AG04449 (cell line): ENCODE measurements at regions of chr4 and their contacts with region 1.

Region 1: DNA sequence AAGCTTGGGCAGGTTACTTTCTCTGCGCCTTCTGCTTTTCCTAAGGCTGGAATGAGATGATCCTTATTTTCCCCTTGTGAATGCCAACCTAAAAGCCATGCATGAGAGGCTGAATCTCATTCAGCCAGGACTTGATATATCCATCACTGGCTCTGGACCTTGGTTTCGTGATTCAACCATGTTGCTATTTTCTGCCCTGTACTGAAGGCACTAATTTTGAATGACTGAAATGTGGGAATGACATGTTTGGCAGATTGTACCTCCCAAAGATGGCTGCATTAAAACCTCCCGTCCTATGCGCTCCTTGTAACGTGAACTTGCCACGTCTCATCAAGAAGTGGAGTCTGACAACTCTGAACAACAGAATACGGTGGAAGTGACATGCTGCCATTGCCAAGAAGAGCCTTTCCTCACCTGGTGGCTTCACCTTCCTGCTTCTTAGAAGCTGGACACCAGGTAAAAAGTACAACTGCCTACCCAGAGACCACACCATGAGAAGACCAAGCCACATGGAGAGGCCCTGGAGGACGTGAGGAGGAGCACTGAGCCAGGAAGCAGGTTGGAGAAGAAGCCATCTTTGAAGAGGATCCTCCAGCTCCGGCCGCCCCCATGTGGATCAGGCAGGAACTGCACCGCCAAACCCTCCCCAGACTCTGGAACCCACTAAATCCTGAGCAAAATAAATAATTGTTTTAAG is 174.5 kb downstream of the NSUN7 start:
- DNase-seq: no peak
- H3K4me3 ChIP-seq: no peak overlapping the region
- CTCF ChIP-seq: peak; percentile 96

Region 2: DNA sequence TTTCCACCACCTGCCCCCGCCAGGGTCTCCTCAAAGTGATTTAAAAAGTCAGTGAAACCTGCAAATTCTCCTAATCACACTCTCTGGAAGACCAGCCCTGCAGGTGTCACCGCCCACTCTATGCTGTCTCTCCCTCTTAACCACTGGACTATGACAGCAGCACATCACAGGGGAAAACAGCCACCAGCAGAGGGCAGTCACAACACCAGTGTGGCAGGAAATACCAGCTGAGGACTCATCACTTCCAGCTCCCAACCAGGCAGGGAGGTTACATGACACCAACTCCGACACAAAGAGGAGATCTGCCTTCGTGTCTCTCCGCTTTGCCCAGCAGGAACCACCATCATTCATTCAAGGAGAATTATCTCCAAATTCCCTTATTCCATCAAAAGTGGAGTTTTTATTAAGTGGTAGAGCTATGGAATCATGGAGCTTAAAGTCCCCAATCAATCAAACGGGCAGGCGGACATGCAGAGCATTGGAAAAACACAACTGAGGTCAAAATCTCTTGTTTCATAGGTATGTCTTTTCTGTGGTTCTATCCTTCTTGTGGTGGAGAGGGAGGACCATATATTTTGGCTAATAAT is 83.2 kb before region 1 on chr4:
- CTCF ChIA-PET with region 1: interaction called, 16 read pairs
- POLR2A ChIA-PET with region 1: no interaction called
- DNase-seq: peak; percentile 50
- H3K4me3 ChIP-seq: no peak overlapping the region
- CTCF ChIP-seq: peak; percentile 85

Region 3: GRCh38 chr4:40940317-40940741 is 16.1 kb after region 1 on chr4:
- CTCF ChIA-PET with region 1: interaction called, 107 read pairs
- POLR2A ChIA-PET with region 1: no interaction called
- DNase-seq: no peak
- H3K4me3 ChIP-seq: no peak overlapping the region
- CTCF ChIP-seq: no peak

Region 4: GRCh38 chr4:40976343-40976742 is 52.1 kb after region 1 on chr4:
- CTCF ChIA-PET with region 1: interaction called, 35 read pairs
- POLR2A ChIA-PET with region 1: no interaction called
- DNase-seq: no peak
- H3K4me3 ChIP-seq: no peak overlapping the region
- CTCF ChIP-seq: peak; percentile 55

Region 5: DNA sequence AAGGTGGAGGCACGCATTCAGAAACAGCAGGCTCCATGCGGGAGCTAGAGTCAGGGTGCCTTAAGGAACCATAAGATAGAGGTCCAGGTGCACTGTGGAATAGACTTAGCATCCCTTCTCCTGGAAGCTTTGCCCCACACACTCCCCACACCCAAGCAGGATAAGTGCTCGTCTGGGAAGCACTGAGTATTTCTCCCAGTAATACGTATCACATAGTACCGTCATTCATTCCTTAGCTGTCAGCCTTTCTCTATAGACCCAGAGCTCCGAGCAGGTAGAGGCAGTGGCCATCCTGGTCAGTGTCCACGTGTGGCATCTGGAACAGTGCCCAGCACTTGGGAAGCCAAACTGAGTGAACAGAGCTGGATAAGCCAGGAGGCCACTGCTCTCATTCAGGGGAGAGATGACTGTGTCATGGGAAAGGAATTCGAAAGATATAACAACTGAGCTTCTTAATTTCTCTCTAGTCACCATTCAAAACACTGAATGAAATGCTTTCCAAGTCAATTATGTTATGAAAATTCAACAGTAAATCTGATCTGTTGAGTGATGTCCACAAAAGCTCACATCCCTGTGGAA is 280.2 kb after region 1 on chr4:
- CTCF ChIA-PET with region 1: interaction called, 336 read pairs
- POLR2A ChIA-PET with region 1: no interaction called
- DNase-seq: no peak
- H3K4me3 ChIP-seq: no peak overlapping the region
- CTCF ChIP-seq: no peak

Region 6: GRCh38 chr4:41227902-41228301 is 303.7 kb after region 1 on chr4:
- CTCF ChIA-PET with region 1: interaction called, 13 read pairs
- POLR2A ChIA-PET with region 1: no interaction called
- DNase-seq: no peak
- H3K4me3 ChIP-seq: no peak overlapping the region
- CTCF ChIP-seq: no peak